CD4-positive, alpha-beta memory T cell (primary cell): ENCODE measurements at regions of chr10 and their contacts with region 1.

Region 1: GRCh38 chr10:86399879-86400704 is 33.5 kb upstream of the GRID1 start:
- DNase-seq: peak; percentile 89 to 92 (median 90)
- H3K4me3 ChIP-seq: peak overlapping the region; percentile 64 to 73
- H3K4me3 Mint-ChIP-seq: peak overlapping the region; percentile 87 to 93 (median 90)
- H3K27ac ChIP-seq: peak overlapping the region; percentile 73
- H3K27ac Mint-ChIP-seq: peak overlapping the region; percentile 89 to 97 (median 92)
- H3K4me1 ChIP-seq: peaks cover 13% of the 10 kb centered on the region
- H3K4me1 Mint-ChIP-seq: peaks cover 4 to 12% (median 7%) of the 10 kb centered on the region in 4 donors
- H3K27me3 ChIP-seq: no peaks in the 10 kb centered on the region
- H3K27me3 Mint-ChIP-seq: no peaks in the 10 kb centered on the region

Region 2: GRCh38 chr10:86411281-86411841 is 11.3 kb after region 1 on chr10:
- CTCF ChIA-PET with region 1: interaction called, 51 read pairs
- POLR2A ChIA-PET with region 1: interaction called, 134 read pairs
- intact Hi-C with region 1: loop called (anchors 1 kb)
- DNase-seq: peak in 2 of 5 donors; percentile 26 to 45
- H3K4me3 ChIP-seq: no peak overlapping the region
- H3K4me3 Mint-ChIP-seq: peak overlapping the region; percentile 54 to 84 (median 78)
- H3K27ac ChIP-seq: peak overlapping the region; percentile 42
- H3K27ac Mint-ChIP-seq: peak overlapping the region; percentile 74 to 94 (median 89)
- H3K4me1 ChIP-seq: peaks cover 46% of the 10 kb centered on the region
- H3K4me1 Mint-ChIP-seq: peaks cover 34 to 59% (median 43%) of the 10 kb centered on the region in 4 donors
- H3K27me3 ChIP-seq: no peaks in the 10 kb centered on the region
- H3K27me3 Mint-ChIP-seq: no peaks in the 10 kb centered on the region

Region 3: DNA sequence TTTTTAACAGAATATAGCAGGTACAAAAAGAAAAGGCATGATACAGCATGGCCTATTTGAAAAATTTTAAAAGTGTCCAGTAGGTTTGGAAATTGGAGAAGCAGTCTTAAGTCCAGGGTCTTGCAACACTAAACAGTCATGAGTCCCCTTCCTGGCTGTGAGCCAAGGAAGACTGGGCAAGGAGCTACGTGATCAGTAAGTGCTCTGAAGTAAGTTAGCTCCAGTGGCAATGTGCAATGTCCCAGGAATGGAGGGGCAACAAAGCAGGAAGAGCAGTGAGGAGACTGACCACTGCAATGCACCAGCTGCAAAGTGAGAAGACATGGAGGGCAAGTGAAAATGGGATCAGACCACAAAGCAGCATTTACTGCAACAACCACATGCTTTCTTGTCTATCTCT is 39.5 kb after region 1 on chr10:
- CTCF ChIA-PET with region 1: interaction called, 7 read pairs
- POLR2A ChIA-PET with region 1: interaction called, 7 read pairs
- intact Hi-C with region 1: loop called (anchors 5 kb)
- DNase-seq: no peak
- H3K4me3 ChIP-seq: no peak overlapping the region
- H3K4me3 Mint-ChIP-seq: peak overlapping the region in 1 of 8 donors; percentile 29
- H3K27ac ChIP-seq: no peak overlapping the region
- H3K27ac Mint-ChIP-seq: peak overlapping the region in 6 of 7 donors; percentile 7 to 77 (median 44)
- H3K4me1 ChIP-seq: no peaks in the 10 kb centered on the region
- H3K4me1 Mint-ChIP-seq: peaks cover 4 to 21% (median 10%) of the 10 kb centered on the region in 4 donors
- H3K27me3 ChIP-seq: no peaks in the 10 kb centered on the region
- H3K27me3 Mint-ChIP-seq: no peaks in the 10 kb centered on the region

Region 4: GRCh38 chr10:86521678-86522509 is 121.8 kb after region 1 on chr10 and contains the start of gene WAPL:
- CTCF ChIA-PET with region 1: interaction called, 11 read pairs
- POLR2A ChIA-PET with region 1: interaction called, 25 read pairs
- intact Hi-C with region 1: loop called (anchors 1 kb)
- DNase-seq: peak; percentile 93 to 97 (median 94)
- H3K4me3 ChIP-seq: peak within 1 kb of the TSS; percentile 33 to 90
- H3K4me3 Mint-ChIP-seq: peak within 1 kb of the TSS; percentile 95 to 99 (median 98)
- H3K27ac ChIP-seq: peak within 1 kb of the TSS; percentile 86
- H3K27ac Mint-ChIP-seq: peak within 1 kb of the TSS; percentile 79 to 97 (median 96)
- H3K4me1 ChIP-seq: peaks cover 60% of the 10 kb centered on the region
- H3K4me1 Mint-ChIP-seq: peaks cover 41 to 72% (median 57%) of the 10 kb centered on the region in 4 donors
- H3K27me3 ChIP-seq: no peaks in the 10 kb centered on the region
- H3K27me3 Mint-ChIP-seq: no peaks in the 10 kb centered on the region
- total RNA-seq, gene WAPL: 54.0 to 55.2 TPM

Region 5: DNA sequence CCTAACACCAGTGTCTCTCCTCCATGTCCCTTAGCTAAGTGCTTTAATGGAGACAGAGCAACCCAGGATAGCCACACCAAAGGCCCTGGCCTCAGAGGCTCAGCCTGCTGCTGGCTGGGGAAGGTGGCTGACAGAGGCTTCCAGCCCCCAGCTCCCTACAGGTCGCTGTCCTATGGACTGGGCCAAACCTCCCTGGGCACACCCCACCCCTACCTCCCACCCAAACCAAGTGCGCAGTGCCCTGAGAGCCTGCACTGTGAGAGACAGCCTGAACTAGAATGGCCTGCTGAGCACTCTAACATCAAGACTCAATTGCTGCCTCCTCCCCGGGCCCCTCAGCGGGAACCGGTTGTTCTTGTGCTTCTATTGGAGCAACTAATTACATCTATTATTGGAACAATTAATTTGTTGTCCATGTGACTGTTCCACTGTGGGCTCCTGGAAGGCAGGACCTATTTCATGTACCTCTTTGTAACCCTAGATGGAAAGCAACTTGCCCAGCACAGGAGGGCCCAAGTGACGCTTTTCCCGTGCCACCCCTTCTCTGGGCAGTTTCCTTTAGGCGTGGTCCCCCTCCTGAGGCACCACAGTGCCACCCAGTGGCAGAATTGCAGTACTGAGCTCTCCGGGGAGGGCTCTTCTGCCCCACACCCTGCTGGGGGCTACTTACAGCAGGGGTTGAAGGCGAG is 185.1 kb after region 1 on chr10:
- CTCF ChIA-PET with region 1: interaction called, 155 read pairs
- POLR2A ChIA-PET with region 1: interaction called, 58 read pairs
- intact Hi-C with region 1: loop called (anchors 1 kb)
- DNase-seq: peak; percentile 53 to 74 (median 66)
- H3K4me3 ChIP-seq: no peak overlapping the region
- H3K4me3 Mint-ChIP-seq: no peak overlapping the region
- H3K27ac ChIP-seq: no peak overlapping the region
- H3K27ac Mint-ChIP-seq: peak overlapping the region in 1 of 7 donors; percentile 57
- H3K4me1 ChIP-seq: peaks cover 5% of the 10 kb centered on the region
- H3K4me1 Mint-ChIP-seq: peaks cover 0 to 3% (median under 1%) of the 10 kb centered on the region in 4 donors
- H3K27me3 ChIP-seq: no peaks in the 10 kb centered on the region
- H3K27me3 Mint-ChIP-seq: no peaks in the 10 kb centered on the region

Region 6: GRCh38 chr10:86755740-86756510 is 355.8 kb after region 1 on chr10:
- CTCF ChIA-PET with region 1: no interaction called
- POLR2A ChIA-PET with region 1: interaction called, 3 read pairs
- intact Hi-C with region 1: loop called (anchors 2 kb)
- DNase-seq: peak; percentile 79 to 90 (median 87)
- H3K4me3 ChIP-seq: peak overlapping the region in 1 of 2 donors; percentile 68
- H3K4me3 Mint-ChIP-seq: peak overlapping the region; percentile 85 to 92 (median 90)
- H3K27ac ChIP-seq: peak overlapping the region; percentile 66
- H3K27ac Mint-ChIP-seq: peak overlapping the region in 6 of 7 donors; percentile 73 to 90 (median 86)
- H3K4me1 ChIP-seq: peaks cover 24% of the 10 kb centered on the region
- H3K4me1 Mint-ChIP-seq: peaks cover 25 to 42% (median 33%) of the 10 kb centered on the region in 4 donors
- H3K27me3 ChIP-seq: no peaks in the 10 kb centered on the region
- H3K27me3 Mint-ChIP-seq: no peaks in the 10 kb centered on the region

Region 7: DNA sequence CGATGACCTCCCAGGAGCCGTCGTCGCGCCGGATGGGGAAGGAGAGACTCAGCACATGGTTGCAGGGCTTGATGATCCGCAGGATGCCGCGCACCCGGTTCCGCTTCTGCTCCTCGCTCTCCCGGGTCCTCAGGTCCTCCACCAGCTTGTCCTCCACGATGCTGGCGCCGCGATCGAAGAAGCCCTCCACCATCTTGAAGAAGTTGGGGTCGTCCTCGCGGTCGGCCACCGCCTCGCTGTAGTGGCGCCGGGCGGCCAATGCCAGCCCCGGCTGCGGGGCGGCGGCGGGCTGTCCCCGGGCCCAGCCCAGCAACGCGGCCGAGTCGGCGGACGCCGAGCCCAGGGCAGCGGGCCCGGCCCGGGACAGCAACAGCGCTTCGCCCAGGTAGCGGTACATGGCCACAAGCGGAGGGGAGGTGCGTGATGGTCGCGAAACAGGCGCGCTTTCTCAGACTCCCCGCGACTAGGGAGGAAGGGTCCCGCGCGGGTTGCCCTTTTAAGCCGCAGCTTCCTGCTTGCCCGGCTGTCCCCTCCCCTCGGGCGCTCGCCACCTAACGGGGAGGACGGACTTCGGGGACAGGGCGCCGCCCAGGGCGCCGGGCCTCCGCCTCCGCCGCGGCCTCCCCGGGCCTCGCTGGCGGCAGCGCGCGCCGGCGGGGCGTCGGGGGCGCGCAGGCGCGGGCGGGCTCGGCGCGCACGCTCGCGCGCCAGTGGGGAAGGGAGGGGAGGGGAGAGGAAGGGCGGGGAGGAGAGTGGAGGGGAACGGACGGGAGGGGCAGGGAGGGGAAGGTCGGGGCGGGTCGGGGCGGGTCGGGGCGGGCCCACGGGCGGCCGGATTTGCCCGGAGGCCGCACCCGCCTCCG is 694.5 kb after region 1 on chr10 and contains the starts of genes GLUD1 and SHLD2:
- CTCF ChIA-PET with region 1: no interaction called
- POLR2A ChIA-PET with region 1: no interaction called
- intact Hi-C with region 1: loop called (anchors 10 kb)
- DNase-seq: peak; percentile 86 to 90 (median 88)
- H3K4me3 ChIP-seq: peak within 1 kb of the TSS; percentile 58 to 63
- H3K4me3 Mint-ChIP-seq: peak within 1 kb of the TSS; percentile 91 to 97 (median 94)
- H3K27ac ChIP-seq: peak within 1 kb of the TSS; percentile 86
- H3K27ac Mint-ChIP-seq: peak within 1 kb of the TSS; percentile 93 to 99 (median 95)
- H3K4me1 ChIP-seq: peaks cover 51% of the 10 kb centered on the region
- H3K4me1 Mint-ChIP-seq: peaks cover 41 to 60% (median 50%) of the 10 kb centered on the region in 4 donors
- H3K27me3 ChIP-seq: no peaks in the 10 kb centered on the region
- H3K27me3 Mint-ChIP-seq: no peaks in the 10 kb centered on the region
- total RNA-seq, gene GLUD1: 75.8 to 83.8 TPM
- total RNA-seq, gene SHLD2: 24.0 to 26.5 TPM